ENCODE measurements at regions of chr10 and their contacts with region 1.

Region 1: DNA sequence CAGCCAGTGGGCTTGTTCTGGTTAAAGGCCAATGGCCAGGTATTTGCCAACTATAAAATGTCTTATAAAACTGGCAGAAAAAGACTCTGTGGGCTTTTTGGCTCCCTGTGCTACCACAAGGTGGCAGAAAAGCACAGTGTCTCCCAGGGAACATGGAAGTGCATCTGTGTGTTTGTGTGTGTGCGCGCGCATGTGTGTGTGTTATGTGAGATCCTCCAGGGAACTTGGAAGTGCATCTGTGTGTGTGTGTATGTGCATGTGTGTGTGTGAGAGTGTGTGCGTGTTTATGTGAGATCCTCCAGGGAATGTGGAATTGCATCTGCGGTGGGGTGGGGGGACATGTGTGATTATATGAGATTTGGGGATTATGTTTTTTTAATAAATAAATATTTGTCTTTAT is 30.2 kb upstream of the ABI1 start:
- DNase-seq: no peak
- ATAC-seq: no peak
- H3K4me3 ChIP-seq: no peak overlapping the region
- H3K27ac ChIP-seq: no peak overlapping the region
- H3K4me1 ChIP-seq: no peaks in the 10 kb centered on the region
- H3K27me3 ChIP-seq: no peaks in the 10 kb centered on the region
- CTCF ChIP-seq: peak; percentile 19

Region 2: GRCh38 chr10:27355918-27356573 is 465.1 kb after region 1 on chr10:
- intact Hi-C with region 1: loop called in 1 of 2 experiments (anchors 5 kb)
- DNase-seq: no peak
- ATAC-seq: no peak
- H3K4me3 ChIP-seq: no peak overlapping the region
- H3K27ac ChIP-seq: no peak overlapping the region
- H3K4me1 ChIP-seq: no peaks in the 10 kb centered on the region
- H3K27me3 ChIP-seq: no peaks in the 10 kb centered on the region
- CTCF ChIP-seq: no peak

Measured in psoas muscle (tissue), 8 donors.